Psoas muscle (tissue), 8 donors: ENCODE measurements at regions of chr9 and their contacts with region 1.

Region 1: DNA sequence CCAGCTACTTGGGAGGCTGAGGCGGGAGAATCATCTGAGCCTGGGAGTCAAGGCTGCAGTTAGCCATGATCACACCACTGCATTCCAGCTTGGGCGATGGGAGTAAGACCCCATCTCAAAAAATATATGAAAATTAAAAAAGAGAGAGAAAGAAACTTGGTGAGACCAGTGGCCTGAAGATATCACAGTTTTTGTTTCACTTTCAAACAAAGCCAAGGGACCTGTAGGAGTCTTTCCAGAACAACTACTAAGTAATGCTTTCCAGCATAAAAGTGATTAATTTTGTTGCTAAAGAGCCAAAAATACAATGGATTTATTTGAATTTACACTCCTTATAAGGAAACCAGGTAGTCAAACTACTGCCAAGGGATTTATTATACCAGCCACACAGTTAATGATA is 23.5 kb downstream of the GKAP1 start:
- DNase-seq: no peak
- ATAC-seq: no peak
- H3K4me3 ChIP-seq: no peak overlapping the region
- H3K27ac ChIP-seq: no peak overlapping the region
- H3K4me1 ChIP-seq: no peaks in the 10 kb centered on the region
- H3K27me3 ChIP-seq: no peaks in the 10 kb centered on the region
- CTCF ChIP-seq: no peak

Region 2: DNA sequence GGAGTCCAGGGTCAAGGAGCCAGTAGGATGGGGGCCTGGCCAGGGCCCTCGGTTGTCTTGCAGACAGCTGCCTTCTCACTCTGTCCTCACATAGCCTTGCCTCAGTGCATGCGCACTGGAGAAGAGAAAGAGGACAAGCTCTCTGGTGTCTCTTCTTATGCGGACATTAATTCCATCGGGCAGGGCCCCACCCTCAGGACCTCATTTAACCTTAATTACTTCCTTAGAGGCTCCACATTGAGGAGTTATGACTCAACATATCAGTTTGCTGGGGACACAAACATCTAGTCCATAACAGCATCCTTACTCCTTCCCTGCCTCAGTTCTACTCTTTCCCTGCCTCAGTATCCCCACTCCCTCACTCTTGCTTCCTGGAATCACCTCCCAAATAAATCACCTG is 334.2 kb before region 1 on chr9:
- intact Hi-C with region 1: loop called in 1 of 2 experiments (anchors 5 kb)
- DNase-seq: no peak
- ATAC-seq: no peak
- H3K4me3 ChIP-seq: no peak overlapping the region
- H3K27ac ChIP-seq: no peak overlapping the region
- H3K4me1 ChIP-seq: no peaks in the 10 kb centered on the region
- H3K27me3 ChIP-seq: no peaks in the 10 kb centered on the region
- CTCF ChIP-seq: no peak

Region 3: GRCh38 chr9:83630938-83631457 is 163.1 kb before region 1 on chr9:
- intact Hi-C with region 1: loop called in 1 of 2 experiments (anchors 10 kb)
- DNase-seq: no peak
- ATAC-seq: peak in 1 of 4 donors; percentile 29
- H3K4me3 ChIP-seq: no peak overlapping the region
- H3K27ac ChIP-seq: no peak overlapping the region
- H3K4me1 ChIP-seq: no peaks in the 10 kb centered on the region
- H3K27me3 ChIP-seq: no peaks in the 10 kb centered on the region
- CTCF ChIP-seq: no peak

Region 4: GRCh38 chr9:83733739-83734138 is 60.3 kb before region 1 on chr9:
- intact Hi-C with region 1: loop called in 1 of 2 experiments (anchors 10 kb)
- DNase-seq: no peak
- ATAC-seq: no peak
- H3K4me3 ChIP-seq: no peak overlapping the region
- H3K27ac ChIP-seq: no peak overlapping the region
- H3K4me1 ChIP-seq: no peaks in the 10 kb centered on the region
- H3K27me3 ChIP-seq: no peaks in the 10 kb centered on the region
- CTCF ChIP-seq: no peak

Region 5: DNA sequence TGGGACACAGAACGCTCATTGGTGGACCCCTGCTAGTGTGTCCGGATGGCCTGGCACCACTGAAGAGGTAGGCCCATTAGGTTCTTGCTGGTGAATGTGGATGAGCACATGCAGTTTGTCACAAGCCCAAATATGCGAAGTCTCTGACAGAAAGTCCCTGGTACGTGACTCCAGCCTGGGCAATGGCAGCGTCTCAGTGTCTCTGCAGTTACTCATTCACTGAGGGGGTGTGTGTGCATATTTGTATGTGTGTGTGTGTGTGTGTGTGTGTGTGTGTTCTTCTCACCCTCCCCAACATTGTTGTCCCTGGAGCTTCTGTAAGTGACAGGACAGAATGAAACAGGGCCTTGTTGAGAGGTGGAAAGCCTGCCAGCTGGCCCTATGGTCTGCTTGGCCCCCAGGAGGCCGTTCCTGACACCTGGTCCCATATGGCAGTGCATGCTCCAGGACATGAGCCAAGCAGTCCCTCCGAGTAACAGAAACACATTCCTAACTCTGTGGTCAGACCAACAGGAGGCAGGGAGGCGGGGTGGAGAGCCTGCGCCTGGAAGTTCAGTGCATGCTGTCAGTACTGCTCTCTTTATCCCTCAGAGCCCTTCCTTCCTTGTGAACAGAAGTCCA is 376.6 kb after region 1 on chr9:
- intact Hi-C with region 1: no loop called
- DNase-seq: peak; percentile 76 to 94
- ATAC-seq: peak; percentile 87 to 96 (median 91)
- H3K4me3 ChIP-seq: no peak overlapping the region
- H3K27ac ChIP-seq: peak overlapping the region; percentile 79
- H3K4me1 ChIP-seq: peaks cover 32% of the 10 kb centered on the region
- H3K27me3 ChIP-seq: no peaks in the 10 kb centered on the region
- CTCF ChIP-seq: no peak